ENCODE measurements at regions of chr16 and their contacts with region 1.

Region 1: GRCh38 chr16:80084685-80085084 is 456.1 kb upstream of the DYNLRB2 start:
- DNase-seq: peak; percentile 69 to 74
- H3K4me3 ChIP-seq: no peak overlapping the region
- H3K4me3 Mint-ChIP-seq: no peak overlapping the region
- H3K27ac Mint-ChIP-seq: no peak overlapping the region
- H3K4me1 ChIP-seq: peaks cover 26% of the 10 kb centered on the region
- H3K4me1 Mint-ChIP-seq: peaks cover 26% of the 10 kb centered on the region
- H3K27me3 ChIP-seq: no peaks in the 10 kb centered on the region
- H3K27me3 Mint-ChIP-seq: no peaks in the 10 kb centered on the region
- CTCF ChIP-seq: peak; percentile 73 to 75

Region 2: GRCh38 chr16:79601931-79602627 is 482.6 kb before region 1 on chr16:
- CTCF ChIA-PET with region 1: interaction called, 13 read pairs
- POLR2A ChIA-PET with region 1: no interaction called
- intact Hi-C with region 1: loop called (anchors 2 kb)
- DNase-seq: peak; percentile 77 to 83
- H3K4me3 ChIP-seq: peak overlapping the region; percentile 56
- H3K4me3 Mint-ChIP-seq: peak overlapping the region; percentile 96
- H3K27ac Mint-ChIP-seq: no peak overlapping the region
- H3K4me1 ChIP-seq: peaks cover 9% of the 10 kb centered on the region
- H3K4me1 Mint-ChIP-seq: peaks cover 6% of the 10 kb centered on the region
- H3K27me3 ChIP-seq: peaks cover 6% of the 10 kb centered on the region
- H3K27me3 Mint-ChIP-seq: peaks cover 25% of the 10 kb centered on the region
- CTCF ChIP-seq: peak; percentile 84 to 93

Region 3: DNA sequence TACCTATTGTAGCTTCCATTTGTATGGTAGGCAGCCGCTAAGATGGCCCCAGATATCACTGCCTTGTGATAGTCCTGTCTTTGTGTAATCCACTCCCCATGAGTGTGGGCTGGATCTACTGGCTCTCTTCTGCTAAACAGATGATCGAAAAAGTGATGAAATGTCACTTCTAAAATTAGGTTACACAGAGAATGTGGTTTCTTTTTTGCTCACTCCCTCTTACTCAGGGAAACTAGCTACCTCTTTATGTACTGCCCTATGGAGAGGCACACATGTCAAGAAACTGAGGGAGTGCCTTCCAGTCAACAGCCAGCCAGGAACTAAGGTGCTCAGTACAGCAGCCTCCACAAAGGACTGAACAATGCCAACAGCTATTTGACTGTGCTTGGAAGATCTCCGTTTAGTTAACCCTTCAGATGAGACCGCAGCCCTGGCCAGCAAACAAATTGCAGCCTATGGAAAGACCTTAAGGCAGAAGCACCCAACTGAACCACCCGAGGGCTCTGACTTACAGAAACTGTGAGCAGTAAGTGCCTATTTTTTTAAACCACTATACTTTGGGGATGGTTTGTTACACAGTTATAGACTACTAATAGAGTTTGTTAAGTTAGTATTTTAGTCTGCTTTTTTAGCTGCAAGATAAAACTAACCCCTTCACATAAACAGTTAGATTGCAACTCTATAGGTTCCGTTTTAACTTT is 370.9 kb before region 1 on chr16:
- CTCF ChIA-PET with region 1: interaction called, 3 read pairs
- POLR2A ChIA-PET with region 1: no interaction called
- intact Hi-C with region 1: loop called (anchors 5 kb)
- DNase-seq: no peak
- H3K4me3 ChIP-seq: no peak overlapping the region
- H3K4me3 Mint-ChIP-seq: no peak overlapping the region
- H3K27ac Mint-ChIP-seq: no peak overlapping the region
- H3K4me1 ChIP-seq: peaks cover 49% of the 10 kb centered on the region
- H3K4me1 Mint-ChIP-seq: peaks cover 27% of the 10 kb centered on the region
- H3K27me3 ChIP-seq: no peaks in the 10 kb centered on the region
- H3K27me3 Mint-ChIP-seq: no peaks in the 10 kb centered on the region
- CTCF ChIP-seq: no peak

Region 4: DNA sequence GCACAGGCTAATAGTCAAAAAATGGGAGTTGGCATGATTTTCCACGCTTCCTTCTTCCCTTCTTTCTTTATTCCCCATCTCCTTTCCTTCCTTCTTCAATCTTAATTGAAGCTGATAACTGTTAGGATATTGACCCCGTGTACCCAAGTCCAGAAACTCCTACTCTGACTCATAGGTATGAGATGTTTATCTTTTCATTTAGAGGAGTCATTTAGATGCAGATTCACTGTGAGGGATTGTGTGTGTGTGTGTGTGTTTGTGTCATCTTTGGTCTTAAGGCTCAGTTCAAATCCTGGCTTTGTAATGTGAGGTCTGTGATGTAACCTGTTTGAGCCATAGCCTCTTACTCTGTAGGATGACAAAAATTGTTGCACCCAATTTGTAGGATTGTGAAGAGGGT is 152.1 kb before region 1 on chr16:
- CTCF ChIA-PET with region 1: no interaction called
- POLR2A ChIA-PET with region 1: no interaction called
- intact Hi-C with region 1: loop called (anchors 10 kb)
- DNase-seq: no peak
- H3K4me3 ChIP-seq: no peak overlapping the region
- H3K4me3 Mint-ChIP-seq: no peak overlapping the region
- H3K27ac Mint-ChIP-seq: no peak overlapping the region
- H3K4me1 ChIP-seq: peaks cover 6% of the 10 kb centered on the region; the same call in 1 of the 2 replicates
- H3K4me1 Mint-ChIP-seq: peaks cover 6% of the 10 kb centered on the region
- H3K27me3 ChIP-seq: no peaks in the 10 kb centered on the region
- H3K27me3 Mint-ChIP-seq: no peaks in the 10 kb centered on the region
- CTCF ChIP-seq: no peak

Region 5: DNA sequence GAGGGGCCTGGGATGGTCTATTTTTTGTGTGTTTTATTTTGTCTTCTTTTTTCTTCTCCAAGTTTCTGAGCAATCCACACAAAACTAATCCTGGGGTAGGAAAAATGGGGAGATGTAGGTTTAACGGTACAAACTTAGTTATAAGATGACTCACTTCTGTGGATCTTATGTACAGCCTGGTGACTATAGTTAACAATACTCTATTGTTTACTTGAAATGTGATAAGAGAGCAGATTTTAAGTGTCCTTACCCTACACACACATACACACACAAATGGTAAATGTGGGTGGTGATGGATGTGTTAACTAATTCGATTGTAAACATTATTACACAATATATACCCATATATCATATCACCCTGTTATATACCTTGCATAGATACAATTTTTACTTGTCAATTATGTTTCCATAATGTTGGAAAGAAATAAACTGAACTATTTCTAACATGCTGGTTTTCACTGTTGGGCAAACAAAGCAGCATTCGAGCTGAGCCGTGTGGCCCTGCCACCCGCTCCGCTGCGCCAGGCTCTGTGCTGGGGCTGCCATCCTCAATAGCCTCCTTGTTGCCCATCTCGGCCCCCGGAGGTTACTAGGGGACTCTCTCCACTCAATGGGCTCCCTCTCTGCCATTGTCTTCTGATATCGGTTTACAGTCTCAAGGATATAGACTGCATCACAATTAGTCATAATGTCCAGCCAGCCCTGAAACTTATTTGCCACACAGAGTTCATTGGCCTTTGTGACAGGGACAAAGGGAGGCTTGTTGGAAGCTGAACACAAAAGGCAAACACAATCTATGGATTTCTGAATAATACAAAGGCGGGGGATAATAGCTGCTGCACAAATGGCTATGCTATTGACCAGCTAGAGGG is 103.8 kb before region 1 on chr16:
- CTCF ChIA-PET with region 1: no interaction called
- POLR2A ChIA-PET with region 1: no interaction called
- intact Hi-C with region 1: no loop called
- DNase-seq: no peak
- H3K4me3 ChIP-seq: no peak overlapping the region
- H3K4me3 Mint-ChIP-seq: no peak overlapping the region
- H3K27ac Mint-ChIP-seq: no peak overlapping the region
- H3K4me1 ChIP-seq: no peaks in the 10 kb centered on the region
- H3K4me1 Mint-ChIP-seq: no peaks in the 10 kb centered on the region
- H3K27me3 ChIP-seq: no peaks in the 10 kb centered on the region; the same call in 1 of the 2 replicates
- H3K27me3 Mint-ChIP-seq: no peaks in the 10 kb centered on the region
- CTCF ChIP-seq: no peak

Region 6: DNA sequence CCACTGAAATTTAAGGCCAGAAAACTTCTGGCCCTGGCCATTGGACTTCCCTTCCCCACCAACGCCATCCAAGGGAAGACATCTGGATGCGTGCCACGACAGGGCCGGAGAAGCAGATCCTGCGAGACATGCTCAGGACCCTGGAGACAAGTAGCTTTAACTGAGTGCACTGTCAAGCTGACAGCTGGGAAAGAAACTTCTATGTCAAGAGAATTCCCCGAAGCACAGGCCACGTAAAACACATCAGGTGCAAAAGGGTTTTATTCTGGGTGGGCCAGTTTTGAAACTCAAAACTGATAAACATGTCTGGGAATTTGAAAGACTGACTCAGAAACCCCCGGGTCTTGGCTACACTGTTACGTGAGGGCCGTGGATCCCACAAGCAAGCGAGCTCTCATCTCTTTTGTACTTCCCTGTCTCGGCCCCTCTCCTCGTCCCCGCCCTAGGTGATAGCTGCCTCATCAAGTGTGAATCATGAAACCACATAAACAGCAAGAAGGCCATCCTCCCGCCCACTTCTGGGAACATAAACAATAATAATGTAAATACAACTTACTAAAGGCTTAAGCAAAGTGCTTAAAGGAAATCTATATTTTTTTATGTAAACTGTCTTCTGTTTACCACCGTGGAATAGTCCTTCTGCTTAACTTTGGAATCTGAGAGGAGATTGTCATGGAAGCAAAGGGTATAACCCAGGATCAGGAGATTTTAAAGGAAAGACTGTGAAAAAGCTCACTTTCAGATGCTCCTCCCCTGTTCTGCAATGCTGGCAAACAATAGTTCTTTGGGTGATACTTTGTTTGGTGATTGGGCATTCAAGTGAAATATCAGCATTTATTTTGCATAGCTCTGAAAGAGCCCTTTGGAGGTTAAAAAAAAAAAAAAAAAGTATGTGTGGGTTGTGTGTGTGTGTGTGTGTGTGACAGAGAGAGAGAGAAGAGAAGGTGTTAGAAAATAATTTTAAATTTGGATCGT is 78.2 kb before region 1 on chr16:
- CTCF ChIA-PET with region 1: no interaction called
- POLR2A ChIA-PET with region 1: no interaction called
- intact Hi-C with region 1: loop called (anchors 5 kb)
- DNase-seq: peak in 1 of 2 experiments; percentile 28
- H3K4me3 ChIP-seq: no peak overlapping the region
- H3K4me3 Mint-ChIP-seq: peak overlapping the region; percentile 34
- H3K27ac Mint-ChIP-seq: peak overlapping the region; percentile 81
- H3K4me1 ChIP-seq: peaks cover 23% of the 10 kb centered on the region
- H3K4me1 Mint-ChIP-seq: peaks cover 24% of the 10 kb centered on the region
- H3K27me3 ChIP-seq: no peaks in the 10 kb centered on the region
- H3K27me3 Mint-ChIP-seq: no peaks in the 10 kb centered on the region
- CTCF ChIP-seq: no peak

Region 7: DNA sequence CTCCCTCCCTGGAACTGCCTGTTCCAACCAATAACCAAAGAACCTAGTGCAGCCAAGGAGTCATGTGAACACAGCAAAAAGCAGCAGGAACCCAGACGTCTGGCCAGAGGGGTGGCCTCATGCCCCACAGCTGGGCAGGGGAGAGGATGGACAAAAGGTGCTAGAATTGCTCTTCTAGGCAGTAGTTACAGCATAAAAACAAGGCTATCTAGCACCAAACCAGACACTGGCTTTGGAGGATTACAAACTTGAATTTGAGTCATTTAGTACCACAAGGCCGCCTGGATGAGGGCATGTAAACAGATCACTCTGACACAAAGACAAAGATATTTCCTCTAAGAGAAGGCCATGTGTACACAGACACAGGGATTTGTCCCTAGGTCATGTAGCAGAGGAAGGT is 60.8 kb before region 1 on chr16:
- CTCF ChIA-PET with region 1: no interaction called
- POLR2A ChIA-PET with region 1: no interaction called
- intact Hi-C with region 1: no loop called
- DNase-seq: peak in 1 of 2 experiments; percentile 11
- H3K4me3 ChIP-seq: no peak overlapping the region
- H3K4me3 Mint-ChIP-seq: no peak overlapping the region
- H3K27ac Mint-ChIP-seq: no peak overlapping the region
- H3K4me1 ChIP-seq: peaks cover 17% of the 10 kb centered on the region
- H3K4me1 Mint-ChIP-seq: peaks cover 27% of the 10 kb centered on the region
- H3K27me3 ChIP-seq: no peaks in the 10 kb centered on the region
- H3K27me3 Mint-ChIP-seq: no peaks in the 10 kb centered on the region
- CTCF ChIP-seq: no peak

Region 8: DNA sequence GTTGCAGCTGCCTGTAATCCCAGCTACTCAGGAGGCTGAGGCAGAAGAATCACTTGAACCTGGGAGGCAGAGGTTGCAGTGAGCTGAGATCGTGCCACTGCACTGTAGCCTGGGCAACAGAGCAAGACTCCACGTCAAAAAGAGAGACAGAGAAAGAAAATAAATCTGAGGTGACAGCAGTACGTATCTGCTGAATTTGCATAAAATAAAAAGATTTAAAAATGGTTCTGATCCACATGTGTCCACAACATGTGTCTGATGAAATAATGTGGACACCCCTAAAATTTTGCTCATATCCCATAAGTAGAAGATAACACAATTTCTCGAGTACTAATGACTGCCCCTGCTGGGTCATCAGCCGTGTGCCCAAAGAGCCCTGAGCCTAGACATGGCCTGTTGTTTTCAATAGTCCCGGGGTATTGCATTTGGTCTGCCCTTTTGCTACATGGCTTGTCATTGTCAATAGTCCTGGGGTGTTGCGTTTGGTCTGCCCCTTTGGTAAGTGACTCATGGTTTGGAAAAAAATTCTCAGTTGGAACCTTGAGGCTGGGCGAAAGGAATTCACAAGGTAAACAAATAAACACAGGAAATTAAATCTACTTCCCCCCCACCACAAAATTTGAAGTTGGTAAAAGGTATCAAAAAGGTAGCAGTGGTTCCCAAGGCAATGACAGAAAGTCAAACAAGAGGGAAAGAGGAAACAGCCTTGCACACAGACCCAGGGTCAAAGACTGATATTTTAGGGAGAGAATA is 49.6 kb before region 1 on chr16:
- CTCF ChIA-PET with region 1: no interaction called
- POLR2A ChIA-PET with region 1: no interaction called
- intact Hi-C with region 1: no loop called
- DNase-seq: no peak
- H3K4me3 ChIP-seq: no peak overlapping the region
- H3K4me3 Mint-ChIP-seq: no peak overlapping the region
- H3K27ac Mint-ChIP-seq: no peak overlapping the region
- H3K4me1 ChIP-seq: no peaks in the 10 kb centered on the region
- H3K4me1 Mint-ChIP-seq: no peaks in the 10 kb centered on the region
- H3K27me3 ChIP-seq: no peaks in the 10 kb centered on the region
- H3K27me3 Mint-ChIP-seq: no peaks in the 10 kb centered on the region
- CTCF ChIP-seq: no peak

Region 9: GRCh38 chr16:80369138-80369958 is 284.7 kb after region 1 on chr16:
- CTCF ChIA-PET with region 1: interaction called, 15 read pairs
- POLR2A ChIA-PET with region 1: no interaction called
- intact Hi-C with region 1: loop called (anchors 1 kb)
- DNase-seq: peak; percentile 74 to 79
- H3K4me3 ChIP-seq: no peak overlapping the region
- H3K4me3 Mint-ChIP-seq: no peak overlapping the region
- H3K27ac Mint-ChIP-seq: no peak overlapping the region
- H3K4me1 ChIP-seq: peaks cover 9% of the 10 kb centered on the region
- H3K4me1 Mint-ChIP-seq: peaks cover 10% of the 10 kb centered on the region
- H3K27me3 ChIP-seq: no peaks in the 10 kb centered on the region
- H3K27me3 Mint-ChIP-seq: no peaks in the 10 kb centered on the region
- CTCF ChIP-seq: peak; percentile 68 to 84

Region 10: DNA sequence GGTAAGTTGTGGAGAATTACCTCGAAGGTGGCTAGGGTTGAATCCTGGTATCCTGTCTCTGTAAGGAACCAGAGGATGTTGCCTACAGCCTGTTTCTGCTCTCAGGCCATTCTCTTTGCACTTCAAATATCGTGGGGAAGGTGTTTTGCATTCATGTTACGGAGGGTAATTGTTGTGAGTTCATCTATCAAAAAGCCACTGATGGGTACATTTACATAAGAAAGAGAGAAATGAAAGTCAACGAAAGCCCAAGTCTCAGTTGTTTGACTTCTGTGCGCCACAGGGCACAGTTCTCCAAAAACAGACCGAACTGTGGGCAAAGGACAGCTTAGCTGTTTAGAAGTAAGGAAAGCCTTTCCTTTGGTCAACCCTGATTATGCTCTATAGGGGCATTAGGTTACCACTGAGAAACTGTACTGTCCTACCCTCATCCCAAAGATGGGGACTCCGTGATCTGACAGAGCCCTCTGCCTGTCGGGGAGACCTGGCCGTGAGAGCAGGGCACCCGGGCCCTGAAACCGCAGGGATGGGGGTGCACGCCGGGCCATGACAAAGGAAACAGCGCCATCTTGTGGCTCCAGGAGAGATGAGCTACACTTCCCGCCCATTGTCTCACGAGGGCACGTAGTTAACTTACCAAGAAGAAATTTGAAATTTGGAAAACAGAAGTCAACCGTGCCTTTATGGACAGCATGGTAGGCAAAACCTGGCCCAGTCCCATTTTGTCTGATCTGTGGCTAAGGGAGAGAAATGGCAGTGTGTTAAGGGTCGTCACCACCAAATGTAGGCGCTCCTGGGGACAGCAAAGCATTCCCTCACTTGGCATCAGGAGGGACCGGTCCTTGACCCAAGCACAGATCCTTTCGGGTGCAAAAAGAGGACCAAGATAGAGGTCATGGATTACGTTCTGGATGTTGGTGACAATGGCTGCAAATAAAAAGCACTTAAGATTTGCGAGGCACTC is 381.6 kb after region 1 on chr16:
- CTCF ChIA-PET with region 1: interaction called, 4 read pairs
- POLR2A ChIA-PET with region 1: no interaction called
- intact Hi-C with region 1: loop called (anchors 10 kb)
- DNase-seq: peak; percentile 70 to 76
- H3K4me3 ChIP-seq: no peak overlapping the region
- H3K4me3 Mint-ChIP-seq: no peak overlapping the region
- H3K27ac Mint-ChIP-seq: no peak overlapping the region
- H3K4me1 ChIP-seq: peaks cover 27% of the 10 kb centered on the region
- H3K4me1 Mint-ChIP-seq: peaks cover 24% of the 10 kb centered on the region
- H3K27me3 ChIP-seq: no peaks in the 10 kb centered on the region
- H3K27me3 Mint-ChIP-seq: no peaks in the 10 kb centered on the region
- CTCF ChIP-seq: peak; percentile 90 to 99

Measured in Caco-2 (cell line).